Dorsolateral prefrontal cortex (tissue), 120 donors: ENCODE measurements at regions of chr7 and their contacts with region 1.

Region 1: DNA sequence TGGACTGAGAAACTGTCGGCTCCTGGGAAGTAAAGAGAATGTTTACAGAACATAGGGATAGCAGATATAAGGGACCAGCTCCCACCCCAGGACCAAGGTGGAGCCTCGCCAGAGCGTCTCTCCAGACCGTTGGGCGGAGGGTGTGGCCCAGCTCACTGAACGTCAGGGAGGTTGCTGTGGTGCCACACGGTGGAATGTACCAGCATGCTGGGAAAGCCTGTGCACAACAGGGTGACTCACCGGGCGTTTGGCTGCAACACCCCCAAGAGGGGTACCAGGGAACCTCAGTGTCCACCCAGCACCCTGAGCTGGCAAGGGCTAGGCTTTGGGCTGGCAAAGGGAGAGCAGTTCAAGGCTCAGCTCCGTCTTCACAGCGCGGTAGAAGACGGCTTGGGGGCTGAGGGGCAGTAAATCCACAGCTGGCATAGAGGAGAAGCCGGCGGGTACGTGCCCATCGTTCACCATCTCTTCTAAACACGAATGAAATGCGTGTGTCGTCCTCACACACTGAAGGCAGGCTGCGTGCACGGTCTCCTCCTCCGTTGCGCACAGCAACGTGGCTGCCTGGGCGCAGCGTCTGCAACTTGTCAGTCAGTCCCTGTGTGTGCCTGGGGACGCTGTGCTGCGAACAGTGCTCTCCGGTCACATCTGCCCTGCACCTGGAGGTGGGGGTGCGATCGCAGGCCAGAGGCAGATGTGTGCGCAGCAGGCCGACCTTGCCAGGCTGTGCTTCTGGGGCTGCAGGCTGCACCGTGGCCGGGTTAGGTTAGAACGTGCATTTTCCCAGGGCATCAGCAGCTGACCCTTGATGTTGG is 8.5 kb upstream of the GET4 start:
- DNase-seq: peak in 5 of 10 donors; percentile 31 to 79 (median 62)
- H3K4me3 ChIP-seq: peak overlapping the region in 5 of 59 donors; percentile 3 to 19 (median 10)
- H3K27ac ChIP-seq: peak overlapping the region in 53 of 59 donors; percentile 17 to 91 (median 76)
- H3K27me3 ChIP-seq: no peaks in the 10 kb centered on the region
- CTCF ChIP-seq: no peak

Region 2: GRCh38 chr7:821688-822087 is 46.2 kb before region 1 on chr7:
- intact Hi-C with region 1: loop called (anchors 5 kb)
- DNase-seq: no peak
- H3K4me3 ChIP-seq: peak overlapping the region in 8 of 59 donors; percentile 0 to 26 (median 6)
- H3K27ac ChIP-seq: peak overlapping the region in 16 of 59 donors; percentile 0 to 50 (median 24)
- H3K27me3 ChIP-seq: no peaks in the 10 kb centered on the region
- CTCF ChIP-seq: peak in 1 of 56 donors; percentile 7